ENCODE measurements at regions of chr2 and their contacts with region 1.

Region 1: DNA sequence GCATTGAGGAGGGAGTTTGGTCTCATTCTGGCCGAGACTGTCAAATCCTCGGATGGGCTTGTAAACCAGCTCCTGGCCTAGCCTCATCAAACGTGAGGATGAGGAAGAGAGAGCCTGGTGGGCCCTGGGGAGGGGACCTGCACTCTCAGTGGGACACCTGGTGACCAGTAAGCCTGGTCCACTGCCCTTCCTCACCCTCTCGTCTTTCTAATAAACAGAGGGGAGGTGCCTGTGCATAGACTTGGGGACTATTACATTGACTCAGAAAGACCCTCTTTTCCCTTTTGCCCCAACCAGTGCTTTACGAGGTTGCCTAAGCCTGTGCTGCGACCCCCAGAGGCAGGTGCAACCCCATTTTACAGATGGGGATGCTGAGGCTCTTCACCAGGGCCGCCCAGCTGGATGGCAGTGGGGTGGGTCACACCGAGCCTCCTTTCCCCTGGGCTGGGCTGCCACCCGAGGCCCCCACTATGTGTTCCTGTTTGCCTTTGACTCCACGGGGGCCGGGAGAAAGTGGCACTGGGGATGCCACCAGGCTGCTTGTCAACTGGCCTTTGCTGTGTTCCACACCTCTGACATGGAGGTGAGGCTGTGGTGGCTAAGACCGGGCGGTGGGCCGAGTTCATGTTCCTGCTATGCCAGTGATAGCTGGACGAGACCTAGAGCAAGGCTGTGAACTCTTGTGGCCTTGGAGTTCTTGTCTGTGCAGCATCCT is 85.9 kb downstream of the GLI2 start:
- DNase-seq: no peak
- H3K4me3 ChIP-seq: no peak overlapping the region
- H3K27ac ChIP-seq: no peak overlapping the region
- H3K4me1 ChIP-seq: no peaks in the 10 kb centered on the region
- H3K27me3 ChIP-seq: peaks cover 1 to 6% of the 10 kb centered on the region in 2 experiments
- CTCF ChIP-seq: no peak
- POLR2A ChIP-seq: no peak

Region 2: GRCh38 chr2:120807751-120808150 is 13.9 kb before region 1 on chr2:
- CTCF ChIA-PET with region 1: no interaction called
- POLR2A ChIA-PET with region 1: no interaction called
- dilution Hi-C with region 1: no loop called
- intact Hi-C with region 1: loop called (anchors 1 kb)
- DNase-seq: no peak
- H3K4me3 ChIP-seq: no peak overlapping the region
- H3K27ac ChIP-seq: no peak overlapping the region
- H3K4me1 ChIP-seq: no peaks in the 10 kb centered on the region
- H3K27me3 ChIP-seq: peaks cover 0 to 1% of the 10 kb centered on the region in 2 experiments
- CTCF ChIP-seq: no peak
- POLR2A ChIP-seq: no peak

Measured in endothelial cell of umbilical vein (primary cell).